ENCODE measurements at regions of chr4 and their contacts with region 1.

Region 1: GRCh38 chr4:109433205-109434006 is at the start of gene SEC24B:
- DNase-seq: peak; percentile 96
- ATAC-seq: peak; percentile 89
- H3K4me3 ChIP-seq: peak within 1 kb of the TSS; percentile 63 to 86 (median 73)
- H3K4me3 Mint-ChIP-seq: peak within 1 kb of the TSS; percentile 92
- H3K27ac ChIP-seq: peak within 1 kb of the TSS; percentile 91 to 92
- H3K27ac Mint-ChIP-seq: peak within 1 kb of the TSS; percentile 95
- H3K4me1 ChIP-seq: peaks cover 21 to 25% of the 10 kb centered on the region in 2 donors
- H3K4me1 Mint-ChIP-seq: peaks cover 49% of the 10 kb centered on the region
- H3K27me3 ChIP-seq: no peaks in the 10 kb centered on the region
- H3K27me3 Mint-ChIP-seq: no peaks in the 10 kb centered on the region
- CTCF ChIP-seq: peak; percentile 95
- total RNA-seq, gene SEC24B: 46.4 and 47.7 TPM in 2 replicates

Region 2: GRCh38 chr4:107719922-107720722 is 1713.3 kb before region 1 on chr4 and contains the start of gene PAPSS1:
- CTCF ChIA-PET with region 1: no interaction called
- POLR2A ChIA-PET with region 1: no interaction called
- intact Hi-C with region 1: loop called (anchors 10 kb)
- DNase-seq: peak; percentile 99
- ATAC-seq: peak; percentile 85
- H3K4me3 ChIP-seq: peak within 1 kb of the TSS; percentile 68 to 93 (median 90)
- H3K4me3 Mint-ChIP-seq: peak within 1 kb of the TSS; percentile 99
- H3K27ac ChIP-seq: peak within 1 kb of the TSS; percentile 50 to 75
- H3K27ac Mint-ChIP-seq: peak within 1 kb of the TSS; percentile 97
- H3K4me1 ChIP-seq: peaks cover 22 to 26% of the 10 kb centered on the region in 2 donors
- H3K4me1 Mint-ChIP-seq: peaks cover 39% of the 10 kb centered on the region
- H3K27me3 ChIP-seq: no peaks in the 10 kb centered on the region
- H3K27me3 Mint-ChIP-seq: no peaks in the 10 kb centered on the region
- CTCF ChIP-seq: no peak
- total RNA-seq, gene PAPSS1: 31.5 and 33.9 TPM in 2 replicates

Region 3: GRCh38 chr4:108650212-108651013 is 783.0 kb before region 1 on chr4 and contains the start of gene OSTC:
- CTCF ChIA-PET with region 1: no interaction called
- POLR2A ChIA-PET with region 1: no interaction called
- intact Hi-C with region 1: loop called (anchors 2 kb)
- DNase-seq: peak; percentile 96
- ATAC-seq: peak; percentile 95
- H3K4me3 ChIP-seq: peak within 1 kb of the TSS; percentile 79 to 96 (median 87)
- H3K4me3 Mint-ChIP-seq: peak within 1 kb of the TSS; percentile 95
- H3K27ac ChIP-seq: peak within 1 kb of the TSS; percentile 77 to 91
- H3K27ac Mint-ChIP-seq: peak within 1 kb of the TSS; percentile 96
- H3K4me1 ChIP-seq: peaks cover 9 to 15% of the 10 kb centered on the region in 2 donors
- H3K4me1 Mint-ChIP-seq: peaks cover 37% of the 10 kb centered on the region
- H3K27me3 ChIP-seq: no peaks in the 10 kb centered on the region
- H3K27me3 Mint-ChIP-seq: no peaks in the 10 kb centered on the region
- CTCF ChIP-seq: no peak
- total RNA-seq, gene OSTC: 38.9 and 39.9 TPM in 2 replicates

Region 4: GRCh38 chr4:109559983-109560686 is 126.7 kb after region 1 on chr4 and contains the start of gene MCUB:
- CTCF ChIA-PET with region 1: interaction called, 8 read pairs
- POLR2A ChIA-PET with region 1: interaction called, 9 read pairs
- intact Hi-C with region 1: loop called (anchors 1 kb)
- DNase-seq: peak; percentile 89
- ATAC-seq: peak; percentile 82
- H3K4me3 ChIP-seq: peak within 1 kb of the TSS; percentile 83 to 93 (median 91)
- H3K4me3 Mint-ChIP-seq: peak within 1 kb of the TSS; percentile 100
- H3K27ac ChIP-seq: peak within 1 kb of the TSS; percentile 77 to 83
- H3K27ac Mint-ChIP-seq: peak within 1 kb of the TSS; percentile 100
- H3K4me1 ChIP-seq: peaks cover 17 to 19% of the 10 kb centered on the region in 2 donors
- H3K4me1 Mint-ChIP-seq: peaks cover 50% of the 10 kb centered on the region
- H3K27me3 ChIP-seq: no peaks in the 10 kb centered on the region
- H3K27me3 Mint-ChIP-seq: no peaks in the 10 kb centered on the region
- CTCF ChIP-seq: no peak
- total RNA-seq, gene MCUB: 52.4 and 59.3 TPM in 2 replicates

Region 5: DNA sequence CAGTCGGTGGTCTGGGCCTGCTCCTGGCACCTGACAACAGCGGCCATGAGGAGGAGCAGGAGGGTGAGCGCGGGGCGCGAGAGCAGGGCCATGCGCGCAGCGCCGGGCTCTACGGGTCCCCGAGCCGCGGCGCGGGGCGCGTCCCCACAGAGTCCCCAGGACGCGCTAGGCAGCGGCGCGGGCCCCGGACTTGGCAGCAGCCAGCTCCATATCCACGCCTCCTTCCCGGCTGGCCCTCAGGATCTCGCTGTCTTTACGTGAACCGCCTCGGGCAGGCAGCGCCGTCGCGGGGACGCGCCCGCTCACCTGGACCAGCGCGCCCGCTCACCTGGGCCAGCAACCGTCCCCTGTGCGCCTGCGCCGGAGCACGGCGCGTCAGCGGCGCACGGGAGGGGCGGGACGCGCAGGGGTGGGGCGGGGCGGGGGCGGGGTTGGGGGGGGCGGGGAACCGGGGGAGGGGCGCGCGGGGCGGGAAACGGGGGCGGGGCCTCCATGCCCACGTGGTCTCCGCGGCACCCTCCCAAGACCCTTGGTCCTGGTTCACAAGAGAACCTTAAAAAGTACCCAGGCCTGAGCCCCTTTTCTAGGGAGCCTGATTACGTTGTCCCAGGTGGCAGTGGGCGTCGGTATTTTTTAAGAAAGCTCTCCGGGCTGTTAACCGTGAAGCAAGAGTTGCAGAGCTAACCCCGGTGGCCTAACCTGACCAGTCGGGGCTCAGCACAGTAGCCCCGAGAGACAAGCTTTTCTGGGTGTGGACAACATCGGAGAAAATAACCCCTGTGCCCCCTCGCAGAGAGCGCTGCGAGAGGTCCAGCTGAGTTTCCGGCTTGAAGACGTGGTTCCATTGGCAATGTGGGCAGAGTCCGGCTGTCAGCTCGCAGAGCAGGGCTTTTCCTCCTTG is 296.6 kb after region 1 on chr4 and contains the start of gene PLA2G12A:
- CTCF ChIA-PET with region 1: interaction called, 8 read pairs
- POLR2A ChIA-PET with region 1: interaction called, 4 read pairs
- intact Hi-C with region 1: loop called (anchors 1 kb)
- DNase-seq: peak; percentile 90
- ATAC-seq: peak; percentile 88
- H3K4me3 ChIP-seq: peak within 1 kb of the TSS; percentile 75 to 95 (median 83)
- H3K4me3 Mint-ChIP-seq: peak within 1 kb of the TSS; percentile 94
- H3K27ac ChIP-seq: peak within 1 kb of the TSS; percentile 41 to 68
- H3K27ac Mint-ChIP-seq: peak within 1 kb of the TSS; percentile 84
- H3K4me1 ChIP-seq: peaks cover 6 to 10% of the 10 kb centered on the region in 2 donors
- H3K4me1 Mint-ChIP-seq: peaks cover 13% of the 10 kb centered on the region
- H3K27me3 ChIP-seq: no peaks in the 10 kb centered on the region
- H3K27me3 Mint-ChIP-seq: no peaks in the 10 kb centered on the region
- CTCF ChIP-seq: no peak
- total RNA-seq, gene PLA2G12A: 7.9 and 8.5 TPM in 2 replicates

Region 6: DNA sequence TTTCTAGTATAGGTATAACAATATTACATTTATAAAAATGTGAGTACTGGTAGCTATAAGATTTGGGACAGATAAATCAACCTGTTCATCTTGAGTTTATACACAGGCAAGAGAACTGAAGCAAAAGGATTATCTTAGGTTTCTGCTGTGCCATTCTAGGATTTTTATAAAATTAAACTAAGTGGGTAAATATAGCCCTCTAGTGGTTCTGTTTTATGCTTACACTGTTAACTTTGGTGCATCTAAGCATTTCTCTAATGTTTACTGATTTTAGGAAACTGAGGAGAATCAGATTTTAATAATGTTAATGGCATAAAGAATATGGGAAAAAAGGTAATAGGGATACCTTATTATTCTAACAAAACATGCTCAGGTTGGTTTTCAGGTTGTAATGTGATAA is 393.3 kb after region 1 on chr4:
- CTCF ChIA-PET with region 1: interaction called, 24 read pairs
- POLR2A ChIA-PET with region 1: no interaction called
- intact Hi-C with region 1: no loop called
- DNase-seq: peak; percentile 30
- ATAC-seq: peak; percentile 24
- H3K4me3 ChIP-seq: no peak overlapping the region
- H3K4me3 Mint-ChIP-seq: no peak overlapping the region
- H3K27ac ChIP-seq: no peak overlapping the region
- H3K27ac Mint-ChIP-seq: no peak overlapping the region
- H3K4me1 ChIP-seq: no peaks in the 10 kb centered on the region
- H3K4me1 Mint-ChIP-seq: no peaks in the 10 kb centered on the region
- H3K27me3 ChIP-seq: no peaks in the 10 kb centered on the region
- H3K27me3 Mint-ChIP-seq: no peaks in the 10 kb centered on the region
- CTCF ChIP-seq: peak; percentile 76